Mammary epithelial cell (primary cell): ENCODE measurements at regions of chr6 and their contacts with region 1.

Region 1: DNA sequence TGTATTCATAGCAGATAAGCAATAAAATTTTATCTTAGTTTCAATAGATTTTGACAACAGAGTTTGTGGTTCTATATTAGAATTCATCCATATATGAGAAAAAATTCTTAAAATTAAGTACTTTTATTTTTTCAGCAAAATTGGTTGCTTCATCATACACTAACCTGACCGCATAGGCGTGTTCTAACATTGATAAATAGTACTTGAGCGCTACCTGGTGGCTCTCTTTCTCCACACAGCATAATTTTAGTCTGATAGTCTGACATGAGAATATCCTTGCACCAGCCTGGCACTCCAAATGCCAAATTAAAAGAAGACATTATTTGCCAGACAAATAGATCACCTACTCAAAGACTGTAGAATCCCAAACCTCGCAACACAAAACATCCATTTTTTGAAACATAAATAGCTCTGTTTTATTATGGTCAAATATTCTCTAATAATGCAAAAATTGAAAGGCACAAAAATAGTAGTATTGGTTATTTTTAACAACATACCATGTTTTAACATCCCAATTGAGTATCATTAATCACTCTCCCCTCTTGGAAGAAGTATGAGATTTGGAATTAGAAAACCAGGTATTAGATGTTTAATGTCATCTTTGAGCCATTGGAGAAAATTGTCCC is 33.0 kb upstream of the FILIP1 start:
- DNase-seq: peak; percentile 55
- H3K4me3 ChIP-seq: no peak overlapping the region
- H3K27ac ChIP-seq: no peak overlapping the region
- H3K4me1 ChIP-seq: no peaks in the 10 kb centered on the region
- H3K27me3 ChIP-seq: no peaks in the 10 kb centered on the region
- CTCF ChIP-seq: peak; percentile 63 to 75

Region 2: GRCh38 chr6:75266716-75267291 is 259.8 kb before region 1 on chr6:
- CTCF ChIA-PET with region 1: interaction called, 3 read pairs
- dilution Hi-C with region 1: no loop called
- in situ Hi-C with region 1: loop called in 1 of 2 experiments (anchors 10 kb)
- intact Hi-C with region 1: loop called (anchors 1 kb)
- DNase-seq: peak; percentile 50
- H3K4me3 ChIP-seq: no peak overlapping the region
- H3K27ac ChIP-seq: no peak overlapping the region
- H3K4me1 ChIP-seq: peaks cover 16% of the 10 kb centered on the region
- H3K27me3 ChIP-seq: no peaks in the 10 kb centered on the region
- CTCF ChIP-seq: peak; percentile 79 to 87

Region 3: DNA sequence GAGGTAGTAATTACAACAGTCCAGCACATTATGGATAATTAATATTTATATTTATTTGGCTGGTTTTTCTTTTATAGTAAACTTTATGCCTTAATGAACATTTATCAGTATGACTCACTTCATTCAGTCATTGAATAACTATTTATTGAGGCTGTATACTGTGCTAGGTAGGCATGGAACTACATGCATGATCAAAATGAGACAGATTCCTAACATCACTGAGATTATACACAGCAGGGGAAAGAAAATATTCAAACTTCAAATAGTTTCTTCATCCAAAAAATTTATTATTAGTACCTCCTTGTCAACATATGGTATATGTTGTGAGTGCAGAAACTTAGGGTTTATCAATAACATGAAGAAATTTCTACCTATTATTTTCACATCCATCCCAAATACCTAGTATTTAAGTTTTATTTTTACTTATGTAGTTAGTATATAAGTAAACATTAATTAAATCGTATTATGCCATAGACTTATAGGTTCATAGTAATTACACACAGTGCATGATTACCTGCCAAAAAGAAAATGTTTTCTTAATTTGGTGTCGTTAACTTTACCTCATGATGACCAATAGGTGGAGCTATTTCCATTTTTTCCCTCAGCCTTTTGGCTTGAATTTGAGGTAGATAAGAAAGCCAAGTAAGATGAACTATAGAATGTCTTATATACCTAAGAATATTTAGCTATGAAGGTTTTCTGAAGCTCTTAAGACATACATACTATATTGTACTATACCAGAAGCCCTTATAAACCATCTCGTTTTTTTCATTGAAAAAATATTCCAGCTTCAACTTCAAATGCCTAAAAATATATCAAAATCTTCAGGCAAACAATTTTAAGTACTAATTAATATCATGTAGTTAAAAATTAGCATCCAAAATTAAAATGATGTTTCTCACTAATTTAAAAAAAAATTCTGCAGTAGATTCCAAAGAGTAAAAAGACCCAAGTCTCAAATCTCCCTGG is 229.5 kb before region 1 on chr6:
- CTCF ChIA-PET with region 1: no interaction called
- dilution Hi-C with region 1: no loop called
- in situ Hi-C with region 1: loop called in 1 of 2 experiments (anchors 10 kb)
- intact Hi-C with region 1: loop called (anchors 1 kb)
- DNase-seq: peak; percentile 38
- H3K4me3 ChIP-seq: no peak overlapping the region
- H3K27ac ChIP-seq: no peak overlapping the region
- H3K4me1 ChIP-seq: no peaks in the 10 kb centered on the region
- H3K27me3 ChIP-seq: no peaks in the 10 kb centered on the region
- CTCF ChIP-seq: peak; percentile 68

Region 4: DNA sequence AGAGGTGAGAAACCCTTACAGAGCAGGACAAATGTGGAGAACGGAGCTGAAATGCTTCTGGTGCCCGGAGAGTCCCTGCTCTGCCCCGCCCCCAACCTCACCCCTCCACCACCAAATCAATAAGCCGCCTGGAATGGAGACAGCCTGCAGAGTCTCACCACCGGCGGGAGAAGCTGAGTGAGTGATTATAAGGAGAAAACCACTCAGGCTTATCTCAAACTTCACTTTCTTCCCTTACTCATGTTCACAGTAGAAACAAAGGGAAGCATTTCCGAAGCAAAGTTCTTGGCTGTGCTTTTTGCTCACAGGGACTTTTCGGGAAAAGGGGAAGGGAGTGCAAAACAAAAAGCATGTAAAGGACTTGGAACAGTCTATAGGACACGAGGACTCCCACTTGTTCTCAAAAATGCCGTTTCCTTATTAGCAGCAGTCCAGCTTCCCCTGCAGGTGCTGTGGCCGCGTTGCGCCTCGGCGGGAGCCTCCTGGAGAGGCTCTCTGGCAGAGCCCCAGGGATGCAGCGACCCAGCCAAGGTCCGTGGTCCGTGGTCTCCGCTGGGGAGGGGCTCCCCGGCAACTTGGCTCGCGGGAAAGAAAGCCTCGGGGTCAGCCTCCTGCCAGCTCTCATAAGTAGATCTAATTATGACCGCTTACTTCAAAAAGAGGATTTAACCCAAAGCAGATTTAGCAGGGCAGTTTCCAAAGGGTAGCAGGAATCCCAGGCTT is 177.2 kb before region 1 on chr6:
- CTCF ChIA-PET with region 1: no interaction called
- dilution Hi-C with region 1: loop called (anchors 25 kb)
- in situ Hi-C with region 1: no loop called
- intact Hi-C with region 1: no loop called
- DNase-seq: no peak
- H3K4me3 ChIP-seq: no peak overlapping the region
- H3K27ac ChIP-seq: no peak overlapping the region
- H3K4me1 ChIP-seq: no peaks in the 10 kb centered on the region
- H3K27me3 ChIP-seq: peaks cover 9% of the 10 kb centered on the region
- CTCF ChIP-seq: peak in 1 of 2 donors; percentile 24

Region 5: GRCh38 chr6:75368151-75368779 is 158.3 kb before region 1 on chr6:
- CTCF ChIA-PET with region 1: no interaction called
- dilution Hi-C with region 1: no loop called
- in situ Hi-C with region 1: no loop called
- intact Hi-C with region 1: loop called (anchors 1 kb)
- DNase-seq: peak; percentile 46
- H3K4me3 ChIP-seq: no peak overlapping the region
- H3K27ac ChIP-seq: no peak overlapping the region
- H3K4me1 ChIP-seq: no peaks in the 10 kb centered on the region
- H3K27me3 ChIP-seq: peaks cover 2% of the 10 kb centered on the region
- CTCF ChIP-seq: peak; percentile 60 to 64